Astrocyte of the cerebellum (primary cell): ENCODE measurements at regions of chr7 and their contacts with region 1.

Region 1: DNA sequence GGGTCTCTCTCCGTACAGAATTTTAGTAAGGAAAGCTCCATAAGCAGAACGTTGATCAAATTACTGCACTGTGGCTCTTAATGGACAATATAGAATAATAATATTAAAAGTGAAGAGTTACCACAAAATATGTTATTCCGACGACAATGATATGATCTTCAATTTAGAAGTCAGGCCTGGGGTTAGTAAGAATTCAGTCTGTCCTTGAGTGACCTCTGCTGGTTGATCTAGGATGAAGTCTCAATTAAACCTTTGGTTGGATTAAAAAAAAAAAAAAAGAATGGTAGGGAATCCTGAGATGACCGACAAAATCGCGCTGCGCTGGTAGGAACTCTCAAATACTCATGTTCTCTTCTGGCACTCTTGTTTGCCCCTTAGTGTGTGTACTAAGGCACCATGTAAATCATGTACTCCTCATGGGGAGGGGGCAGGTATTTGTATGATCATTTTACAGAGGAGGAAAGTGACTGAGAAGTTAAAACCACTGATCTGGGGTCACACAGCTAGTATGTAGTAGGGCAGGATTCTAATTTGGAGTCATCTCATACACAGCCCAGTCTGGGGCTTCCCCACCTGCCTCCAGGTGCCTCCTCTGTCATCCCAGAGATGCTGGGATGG is 161.3 kb upstream of the NPVF start:
- DNase-seq: peak; percentile 36
- H3K4me3 ChIP-seq: no peak overlapping the region
- CTCF ChIP-seq: peak; percentile 52

Region 2: GRCh38 chr7:25250386-25250785 is 139.2 kb before region 1 on chr7:
- in situ Hi-C with region 1: loop called (anchors 5 kb)
- DNase-seq: peak; percentile 43
- H3K4me3 ChIP-seq: no peak overlapping the region
- CTCF ChIP-seq: no peak

Region 3: GRCh38 chr7:25851332-25852210 is 462.0 kb after region 1 on chr7:
- in situ Hi-C with region 1: loop called (anchors 5 kb)
- DNase-seq: peak; percentile 67
- H3K4me3 ChIP-seq: no peak overlapping the region
- CTCF ChIP-seq: peak; percentile 85